Right lobe of liver (tissue), 6 donors: ENCODE measurements at regions of chr2 and their contacts with region 1.

Region 1: GRCh38 chr2:84022810-84023431 is 436.2 kb downstream of the SUCLG1 start:
- DNase-seq: peak in 1 of 3 donors; percentile 47
- ATAC-seq: peak; percentile 66 to 78 (median 74)
- H3K4me3 ChIP-seq: no peak overlapping the region
- H3K27ac ChIP-seq: no peak overlapping the region
- H3K4me1 ChIP-seq: no peaks in the 10 kb centered on the region
- H3K27me3 ChIP-seq: no peaks in the 10 kb centered on the region
- CTCF ChIP-seq: peak; percentile 63 to 76 (median 66)
- POLR2A ChIP-seq: no peak

Region 2: DNA sequence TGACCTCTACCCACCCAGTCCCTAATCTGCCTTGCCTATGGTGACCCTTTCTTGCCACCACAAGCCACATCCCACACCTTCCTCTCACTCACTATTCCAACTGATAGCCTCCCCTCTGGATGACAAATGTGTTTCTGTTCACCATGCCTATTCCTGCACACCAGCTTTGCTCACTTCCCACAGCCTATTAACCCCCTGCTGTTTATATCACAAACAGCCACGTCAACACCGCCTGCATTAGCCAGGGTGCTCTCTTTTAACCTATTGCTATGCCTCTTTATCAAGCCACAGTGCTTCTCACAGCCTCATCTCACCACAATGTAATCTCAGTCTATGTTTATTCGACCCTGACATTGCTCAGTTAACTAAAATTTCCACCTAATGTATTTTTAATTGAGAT is 164.3 kb after region 1 on chr2:
- intact Hi-C with region 1: no loop called
- DNase-seq: no peak
- ATAC-seq: no peak
- H3K4me3 ChIP-seq: no peak overlapping the region
- H3K27ac ChIP-seq: no peak overlapping the region
- H3K4me1 ChIP-seq: no peaks in the 10 kb centered on the region
- H3K27me3 ChIP-seq: no peaks in the 10 kb centered on the region
- CTCF ChIP-seq: no peak
- POLR2A ChIP-seq: no peak

Region 3: DNA sequence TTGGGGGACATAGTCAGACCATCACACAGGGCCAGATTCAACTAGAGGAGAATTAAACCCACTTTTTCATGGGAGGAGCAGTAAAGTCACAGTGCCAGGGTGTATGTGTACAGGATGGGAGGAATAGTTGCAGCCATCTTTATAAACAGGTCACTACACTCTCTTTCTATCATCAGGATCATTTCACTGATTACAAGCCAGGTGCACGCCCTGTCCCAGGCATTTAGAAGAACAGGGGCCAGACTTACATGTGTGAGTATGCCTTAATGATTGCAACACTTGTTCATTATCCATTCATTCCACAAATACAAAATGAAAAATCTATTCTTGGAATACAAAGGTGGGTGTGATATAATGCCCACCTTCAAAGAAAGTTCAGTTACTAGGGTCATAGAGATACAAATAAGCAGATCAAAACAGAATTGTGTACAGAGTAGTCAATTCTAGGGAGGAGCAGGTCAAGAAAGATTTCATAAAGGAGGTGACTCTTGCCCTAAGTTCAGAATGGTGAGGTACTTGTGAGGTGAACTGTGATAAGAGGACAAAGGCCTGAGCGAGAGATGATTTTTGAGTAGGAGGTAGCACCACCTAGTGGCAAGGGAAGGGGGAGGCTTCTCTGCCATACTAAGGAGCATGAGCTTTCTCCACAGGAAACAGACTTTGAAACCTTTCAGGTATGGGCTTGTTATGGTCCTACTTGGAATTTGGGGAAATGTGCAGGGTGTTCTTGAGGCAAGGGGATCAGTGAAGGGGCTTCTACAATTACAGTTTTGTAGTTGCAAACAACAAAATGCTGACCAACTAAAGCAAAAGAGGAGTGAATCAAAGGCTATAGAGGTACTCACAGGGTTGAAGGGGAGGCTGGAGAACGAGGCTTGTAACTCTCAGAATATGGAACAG is 279.8 kb after region 1 on chr2:
- intact Hi-C with region 1: loop called in 1 of 2 experiments (anchors 5 kb)
- DNase-seq: peak in 1 of 3 donors; percentile 58
- ATAC-seq: peak; percentile 97 to 100 (median 98)
- H3K4me3 ChIP-seq: no peak overlapping the region
- H3K27ac ChIP-seq: no peak overlapping the region
- H3K4me1 ChIP-seq: no peaks in the 10 kb centered on the region
- H3K27me3 ChIP-seq: no peaks in the 10 kb centered on the region
- CTCF ChIP-seq: peak; percentile 78 to 89 (median 81)
- POLR2A ChIP-seq: no peak

Region 4: DNA sequence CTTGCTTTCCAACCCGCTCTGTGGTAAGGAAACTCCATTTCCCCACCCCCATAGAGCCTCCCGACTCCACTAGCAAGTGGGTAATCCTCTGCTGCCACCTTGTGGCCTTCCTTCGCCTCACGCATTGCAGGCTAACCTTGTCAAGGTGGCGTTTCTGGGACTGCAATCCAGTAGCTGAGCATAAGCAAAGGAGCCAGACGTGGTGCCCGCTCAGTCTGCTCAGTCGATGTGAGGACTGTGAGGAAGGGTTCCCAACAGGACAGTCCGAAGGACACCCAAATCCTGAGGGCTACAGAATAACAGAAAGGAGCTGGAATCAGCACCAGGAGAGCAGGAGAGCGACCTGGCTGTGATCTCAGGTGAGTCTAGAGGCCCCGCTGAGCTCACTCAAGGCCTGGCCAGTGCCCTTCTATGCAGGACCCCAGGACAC is 292.0 kb after region 1 on chr2:
- intact Hi-C with region 1: loop called (anchors 5 to 10 kb)
- DNase-seq: peak; percentile 84 to 88 (median 86)
- ATAC-seq: peak; percentile 98 to 100 (median 100)
- H3K4me3 ChIP-seq: no peak overlapping the region
- H3K27ac ChIP-seq: no peak overlapping the region
- H3K4me1 ChIP-seq: no peaks in the 10 kb centered on the region
- H3K27me3 ChIP-seq: no peaks in the 10 kb centered on the region
- CTCF ChIP-seq: peak; percentile 88 to 97 (median 94)
- POLR2A ChIP-seq: no peak